CD8-positive, alpha-beta T cell (primary cell): ENCODE measurements at regions of chr3 and their contacts with region 1.

Region 1: GRCh38 chr3:120558771-120559241 is 37.3 kb upstream of the NDUFB4 start:
- DNase-seq: peak; percentile 81 to 93 (median 89)
- ATAC-seq: peak; percentile 90
- H3K4me3 ChIP-seq: peak overlapping the region; percentile 33 to 46
- H3K4me3 Mint-ChIP-seq: peak overlapping the region; percentile 83
- H3K27ac ChIP-seq: peak overlapping the region; percentile 14 to 25
- H3K27ac Mint-ChIP-seq: peak overlapping the region; percentile 50
- H3K4me1 ChIP-seq: peaks cover 5% of the 10 kb centered on the region
- H3K4me1 Mint-ChIP-seq: peaks cover 16% of the 10 kb centered on the region
- H3K27me3 ChIP-seq: no peaks in the 10 kb centered on the region
- H3K27me3 Mint-ChIP-seq: peaks cover 5% of the 10 kb centered on the region
- CTCF ChIP-seq: peak; percentile 93

Region 2: DNA sequence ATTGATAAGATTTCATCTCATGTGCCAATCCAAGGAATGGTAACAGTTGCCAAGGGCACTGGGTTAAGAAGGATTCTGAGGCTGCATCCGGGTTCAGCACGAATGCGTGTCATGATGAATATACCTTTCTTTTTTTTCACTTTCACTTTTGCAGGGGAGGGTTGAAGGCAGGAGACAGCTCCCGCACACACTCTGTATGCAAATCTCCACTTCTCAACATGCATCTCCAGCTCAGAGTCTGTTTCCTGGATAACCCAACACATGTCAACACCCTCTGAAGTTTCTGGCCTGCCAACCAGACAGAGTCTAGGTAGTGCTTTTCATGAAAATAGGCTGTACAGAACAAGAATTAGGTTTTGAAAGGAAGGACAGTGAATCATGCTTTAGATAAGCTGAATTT is 1339.7 kb before region 1 on chr3:
- CTCF ChIA-PET with region 1: no interaction called
- POLR2A ChIA-PET with region 1: no interaction called
- intact Hi-C with region 1: no loop called
- DNase-seq: peak in 3 of 9 experiments; percentile 21 to 34 (median 31)
- ATAC-seq: peak; percentile 89
- H3K4me3 ChIP-seq: no peak overlapping the region
- H3K4me3 Mint-ChIP-seq: peak overlapping the region; percentile 40
- H3K27ac ChIP-seq: peak overlapping the region in 1 of 2 experiments; percentile 2
- H3K27ac Mint-ChIP-seq: peak overlapping the region; percentile 73
- H3K4me1 ChIP-seq: no peaks in the 10 kb centered on the region
- H3K4me1 Mint-ChIP-seq: peaks cover 18% of the 10 kb centered on the region
- H3K27me3 ChIP-seq: no peaks in the 10 kb centered on the region
- H3K27me3 Mint-ChIP-seq: no peaks in the 10 kb centered on the region
- CTCF ChIP-seq: no peak

Region 3: GRCh38 chr3:120021523-120021922 is 537.3 kb before region 1 on chr3:
- CTCF ChIA-PET with region 1: no interaction called
- POLR2A ChIA-PET with region 1: no interaction called
- intact Hi-C with region 1: no loop called
- DNase-seq: no peak
- ATAC-seq: no peak
- H3K4me3 ChIP-seq: no peak overlapping the region
- H3K4me3 Mint-ChIP-seq: peak overlapping the region; percentile 6
- H3K27ac ChIP-seq: no peak overlapping the region
- H3K27ac Mint-ChIP-seq: peak overlapping the region; percentile 46
- H3K4me1 ChIP-seq: peaks cover 39% of the 10 kb centered on the region
- H3K4me1 Mint-ChIP-seq: peaks cover 83% of the 10 kb centered on the region
- H3K27me3 ChIP-seq: no peaks in the 10 kb centered on the region
- H3K27me3 Mint-ChIP-seq: no peaks in the 10 kb centered on the region
- CTCF ChIP-seq: no peak

Region 4: DNA sequence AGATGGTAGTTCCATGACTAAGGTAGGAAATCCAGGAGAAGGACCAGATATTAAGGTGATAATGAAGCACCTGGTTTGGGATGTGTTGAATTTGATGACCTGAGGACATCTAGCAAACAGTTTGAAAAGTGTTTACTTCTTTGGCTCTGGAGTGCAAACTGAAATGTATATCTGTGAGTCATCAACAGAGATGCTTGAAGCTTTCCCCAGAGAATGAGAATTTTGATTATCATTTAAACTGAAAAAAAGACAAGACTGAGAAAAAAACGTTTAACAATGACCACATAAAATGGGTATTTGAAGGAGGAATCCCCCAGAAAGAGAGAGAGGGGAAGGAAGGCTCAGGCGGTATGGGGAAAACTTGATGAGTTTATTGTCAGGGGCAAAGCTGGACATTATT is 443.8 kb before region 1 on chr3:
- CTCF ChIA-PET with region 1: no interaction called
- POLR2A ChIA-PET with region 1: no interaction called
- intact Hi-C with region 1: no loop called
- DNase-seq: no peak
- ATAC-seq: no peak
- H3K4me3 ChIP-seq: no peak overlapping the region
- H3K4me3 Mint-ChIP-seq: no peak overlapping the region
- H3K27ac ChIP-seq: no peak overlapping the region
- H3K27ac Mint-ChIP-seq: no peak overlapping the region
- H3K4me1 ChIP-seq: no peaks in the 10 kb centered on the region
- H3K4me1 Mint-ChIP-seq: no peaks in the 10 kb centered on the region
- H3K27me3 ChIP-seq: no peaks in the 10 kb centered on the region
- H3K27me3 Mint-ChIP-seq: no peaks in the 10 kb centered on the region
- CTCF ChIP-seq: no peak

Region 5: DNA sequence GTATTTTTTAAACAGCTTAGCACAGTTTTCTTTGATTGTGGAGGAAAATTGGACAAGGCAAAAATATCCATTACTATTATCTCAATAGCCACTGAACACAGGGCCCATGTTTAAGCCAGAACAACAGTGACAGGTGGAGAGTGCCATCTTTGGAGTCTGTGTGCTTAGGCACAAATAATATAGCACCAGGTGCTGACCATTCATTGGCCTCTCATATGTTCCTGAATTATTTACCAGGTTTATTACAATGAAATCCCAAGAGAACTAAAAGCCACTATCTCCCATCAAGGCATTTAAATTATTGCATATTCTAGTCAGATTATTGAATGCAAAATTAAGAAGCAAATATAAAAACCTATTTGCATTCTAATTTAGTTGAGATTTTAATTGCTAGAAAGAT is 313.4 kb before region 1 on chr3:
- CTCF ChIA-PET with region 1: interaction called, 68 read pairs
- POLR2A ChIA-PET with region 1: interaction called, 5 read pairs
- intact Hi-C with region 1: loop called (anchors 1 kb)
- DNase-seq: no peak
- ATAC-seq: no peak
- H3K4me3 ChIP-seq: no peak overlapping the region
- H3K4me3 Mint-ChIP-seq: no peak overlapping the region
- H3K27ac ChIP-seq: no peak overlapping the region
- H3K27ac Mint-ChIP-seq: no peak overlapping the region
- H3K4me1 ChIP-seq: no peaks in the 10 kb centered on the region
- H3K4me1 Mint-ChIP-seq: no peaks in the 10 kb centered on the region
- H3K27me3 ChIP-seq: peaks cover 0 to 3% of the 10 kb centered on the region in 2 experiments
- H3K27me3 Mint-ChIP-seq: peaks cover 17% of the 10 kb centered on the region
- CTCF ChIP-seq: no peak

Region 6: DNA sequence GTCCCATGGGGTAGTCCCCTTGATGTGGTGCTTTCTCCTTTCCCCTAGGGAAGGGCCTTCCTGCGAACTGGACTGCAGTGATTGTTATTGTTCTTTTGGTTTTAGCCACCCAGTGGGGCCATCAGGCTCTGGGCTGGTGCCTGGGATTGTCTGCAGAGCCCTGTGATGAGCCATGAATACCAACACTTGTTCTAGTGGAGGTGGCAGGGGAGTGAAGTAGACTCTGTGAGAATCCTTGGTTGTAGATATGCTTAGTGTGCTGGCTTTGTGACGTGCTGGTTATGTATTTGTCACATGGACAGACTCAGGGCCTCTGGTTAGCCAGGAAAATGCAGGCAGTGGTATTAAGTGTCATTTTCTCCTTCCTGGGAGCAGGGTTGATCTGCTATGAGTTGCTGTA is 14.4 kb before region 1 on chr3:
- CTCF ChIA-PET with region 1: interaction called, 45 read pairs
- POLR2A ChIA-PET with region 1: no interaction called
- intact Hi-C with region 1: no loop called
- DNase-seq: no peak
- ATAC-seq: no peak
- H3K4me3 ChIP-seq: no peak overlapping the region
- H3K4me3 Mint-ChIP-seq: no peak overlapping the region
- H3K27ac ChIP-seq: no peak overlapping the region
- H3K27ac Mint-ChIP-seq: no peak overlapping the region
- H3K4me1 ChIP-seq: no peaks in the 10 kb centered on the region
- H3K4me1 Mint-ChIP-seq: no peaks in the 10 kb centered on the region
- H3K27me3 ChIP-seq: no peaks in the 10 kb centered on the region
- H3K27me3 Mint-ChIP-seq: peaks cover 11% of the 10 kb centered on the region
- CTCF ChIP-seq: no peak

Region 7: DNA sequence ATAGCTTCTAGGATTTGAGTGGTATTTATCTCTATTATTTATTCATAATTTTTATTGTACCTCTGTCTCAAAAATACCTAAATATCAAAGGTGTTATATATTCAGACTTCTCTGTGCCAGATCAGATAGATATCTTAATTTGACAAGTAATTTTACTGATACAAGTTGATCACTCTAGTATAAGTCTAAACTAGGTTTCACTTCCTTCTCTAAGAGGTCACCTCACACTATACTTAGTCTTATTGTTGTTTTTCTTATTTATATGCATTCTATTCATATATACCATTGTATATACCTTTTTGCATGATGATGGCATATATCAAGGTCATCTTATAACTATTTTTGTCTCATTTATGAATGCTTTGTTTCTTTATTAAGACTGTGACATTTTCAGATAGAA is 149.6 kb after region 1 on chr3:
- CTCF ChIA-PET with region 1: no interaction called
- POLR2A ChIA-PET with region 1: no interaction called
- intact Hi-C with region 1: loop called in 1 of 2 experiments (anchors 10 kb)
- DNase-seq: no peak
- ATAC-seq: no peak
- H3K4me3 ChIP-seq: no peak overlapping the region
- H3K4me3 Mint-ChIP-seq: no peak overlapping the region
- H3K27ac ChIP-seq: no peak overlapping the region
- H3K27ac Mint-ChIP-seq: peak overlapping the region; percentile 4
- H3K4me1 ChIP-seq: no peaks in the 10 kb centered on the region
- H3K4me1 Mint-ChIP-seq: peaks cover 9% of the 10 kb centered on the region
- H3K27me3 ChIP-seq: no peaks in the 10 kb centered on the region
- H3K27me3 Mint-ChIP-seq: no peaks in the 10 kb centered on the region
- CTCF ChIP-seq: no peak

Region 8: GRCh38 chr3:120765830-120766493 is 207.2 kb after region 1 on chr3:
- CTCF ChIA-PET with region 1: interaction called, 11 read pairs
- POLR2A ChIA-PET with region 1: no interaction called
- intact Hi-C with region 1: no loop called
- DNase-seq: no peak
- ATAC-seq: no peak
- H3K4me3 ChIP-seq: no peak overlapping the region
- H3K4me3 Mint-ChIP-seq: no peak overlapping the region
- H3K27ac ChIP-seq: no peak overlapping the region
- H3K27ac Mint-ChIP-seq: no peak overlapping the region
- H3K4me1 ChIP-seq: peaks cover 7% of the 10 kb centered on the region
- H3K4me1 Mint-ChIP-seq: peaks cover 66% of the 10 kb centered on the region
- H3K27me3 ChIP-seq: no peaks in the 10 kb centered on the region
- H3K27me3 Mint-ChIP-seq: no peaks in the 10 kb centered on the region
- CTCF ChIP-seq: no peak

Region 9: GRCh38 chr3:120801484-120801883 is 242.7 kb after region 1 on chr3:
- CTCF ChIA-PET with region 1: interaction called, 70 read pairs
- POLR2A ChIA-PET with region 1: no interaction called
- intact Hi-C with region 1: no loop called
- DNase-seq: no peak
- ATAC-seq: no peak
- H3K4me3 ChIP-seq: no peak overlapping the region
- H3K4me3 Mint-ChIP-seq: no peak overlapping the region
- H3K27ac ChIP-seq: no peak overlapping the region
- H3K27ac Mint-ChIP-seq: no peak overlapping the region
- H3K4me1 ChIP-seq: no peaks in the 10 kb centered on the region
- H3K4me1 Mint-ChIP-seq: no peaks in the 10 kb centered on the region
- H3K27me3 ChIP-seq: no peaks in the 10 kb centered on the region
- H3K27me3 Mint-ChIP-seq: peaks cover 2% of the 10 kb centered on the region
- CTCF ChIP-seq: no peak